Activated naive CD4-positive, alpha-beta T cell treated with anti-CD3 and anti-CD28 coated beads for 36 hours (primary cell): ENCODE measurements at regions of chrX and their contacts with region 1.

Region 1: DNA sequence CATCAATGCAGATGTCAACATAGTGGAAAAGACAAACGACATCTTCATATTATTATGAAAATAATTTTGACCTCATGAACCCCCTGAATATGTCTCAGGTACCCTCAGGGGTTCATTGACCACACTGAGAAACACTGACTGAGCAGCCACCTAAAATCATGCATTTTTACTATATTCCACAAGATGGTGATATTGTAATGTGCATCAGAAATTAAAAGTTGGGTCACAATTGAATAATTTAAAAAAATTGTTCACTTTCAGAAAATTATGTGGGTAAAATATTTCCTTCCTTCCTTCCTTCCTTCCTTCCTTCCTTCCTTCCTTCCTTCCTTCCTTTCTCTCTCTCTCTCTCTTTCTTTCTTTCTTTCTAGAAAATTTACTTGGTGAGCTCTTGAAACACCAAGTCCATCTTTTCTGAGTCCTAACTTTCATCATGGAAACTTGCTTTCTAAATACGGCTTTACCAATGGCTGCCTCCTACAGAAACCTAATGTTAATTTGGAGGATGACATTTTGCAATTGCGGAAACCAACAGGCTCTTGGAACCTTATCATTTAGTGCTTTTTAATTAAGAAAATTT is 103.6 kb downstream of the RTL3 start:
- DNase-seq: no peak
- H3K4me3 Mint-ChIP-seq: no peak overlapping the region
- H3K27ac Mint-ChIP-seq: no peak overlapping the region
- H3K4me1 Mint-ChIP-seq: peaks cover 2% of the 10 kb centered on the region
- H3K27me3 Mint-ChIP-seq: no peaks in the 10 kb centered on the region

Region 2: GRCh38 chrX:78573630-78574029 is 18.1 kb after region 1 on chrX:
- CTCF ChIA-PET with region 1: no interaction called
- intact Hi-C with region 1: no loop called
- DNase-seq: no peak
- H3K4me3 Mint-ChIP-seq: no peak overlapping the region
- H3K27ac Mint-ChIP-seq: no peak overlapping the region
- H3K4me1 Mint-ChIP-seq: no peaks in the 10 kb centered on the region
- H3K27me3 Mint-ChIP-seq: no peaks in the 10 kb centered on the region

Region 3: DNA sequence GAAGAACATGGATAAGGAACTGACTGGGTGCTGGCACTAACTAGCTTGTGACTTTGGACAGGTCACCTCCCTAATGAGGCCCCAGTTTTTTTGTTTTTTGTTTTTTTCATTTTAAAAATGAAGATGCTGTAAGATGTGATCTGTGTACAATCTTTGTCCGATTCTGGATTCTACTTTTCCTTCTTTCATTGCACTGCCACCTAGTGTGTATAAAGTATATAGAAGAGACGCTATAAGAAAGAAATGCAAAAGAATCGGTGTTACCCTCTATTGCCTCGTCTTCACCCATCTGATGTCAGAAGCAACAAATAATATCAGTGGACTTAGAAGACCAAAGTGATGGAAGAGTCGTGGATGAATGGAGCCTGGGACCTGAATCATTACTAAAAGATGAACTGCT is 331.1 kb after region 1 on chrX:
- CTCF ChIA-PET with region 1: no interaction called
- intact Hi-C with region 1: loop called (anchors 5 kb)
- DNase-seq: no peak
- H3K4me3 Mint-ChIP-seq: no peak overlapping the region
- H3K27ac Mint-ChIP-seq: no peak overlapping the region
- H3K4me1 Mint-ChIP-seq: peaks cover 9% of the 10 kb centered on the region
- H3K27me3 Mint-ChIP-seq: no peaks in the 10 kb centered on the region

Region 4: GRCh38 chrX:79036157-79036880 is 480.8 kb after region 1 on chrX:
- CTCF ChIA-PET with region 1: no interaction called
- intact Hi-C with region 1: no loop called
- DNase-seq: no peak
- H3K4me3 Mint-ChIP-seq: peak overlapping the region; percentile 36
- H3K27ac Mint-ChIP-seq: no peak overlapping the region
- H3K4me1 Mint-ChIP-seq: peaks cover 42% of the 10 kb centered on the region
- H3K27me3 Mint-ChIP-seq: no peaks in the 10 kb centered on the region

Region 5: GRCh38 chrX:79452881-79453280 is 897.4 kb after region 1 on chrX:
- CTCF ChIA-PET with region 1: no interaction called
- intact Hi-C with region 1: loop called (anchors 1 kb)
- DNase-seq: no peak
- H3K4me3 Mint-ChIP-seq: no peak overlapping the region
- H3K27ac Mint-ChIP-seq: no peak overlapping the region
- H3K4me1 Mint-ChIP-seq: no peaks in the 10 kb centered on the region
- H3K27me3 Mint-ChIP-seq: no peaks in the 10 kb centered on the region